Right ventricle myocardium inferior (tissue), 1 donor: ENCODE measurements at regions of chr1 and their contacts with region 1.

Region 1: GRCh38 chr1:93061895-93062792 is 16.9 kb upstream of the MTF2 start:
- DNase-seq: no peak
- ATAC-seq: no peak

Region 2: DNA sequence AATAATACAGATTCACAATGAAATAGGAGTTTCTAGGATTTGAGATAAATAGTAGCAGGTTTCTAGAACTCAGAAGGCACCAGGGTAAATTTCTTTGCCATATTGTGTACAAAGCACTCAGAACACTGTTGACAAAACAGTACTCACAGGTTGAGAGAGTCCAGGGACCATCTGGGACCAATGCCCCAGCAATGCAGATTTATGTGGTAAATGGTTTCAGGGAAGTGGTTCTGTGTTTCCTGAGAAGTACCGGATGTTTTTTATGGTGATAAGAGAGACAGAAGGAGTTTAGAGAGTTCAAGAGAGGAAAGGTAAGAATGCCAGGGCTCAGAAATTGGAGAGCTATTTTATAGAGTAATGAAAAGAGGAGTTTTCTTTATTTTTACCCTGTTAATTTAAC is 71.3 kb before region 1 on chr1:
- intact Hi-C with region 1: no loop called
- DNase-seq: no peak
- ATAC-seq: no peak

Region 3: GRCh38 chr1:93007941-93008577 is 54.1 kb before region 1 on chr1:
- intact Hi-C with region 1: no loop called
- DNase-seq: no peak
- ATAC-seq: no peak

Region 4: GRCh38 chr1:93021539-93022134 is 40.5 kb before region 1 on chr1:
- intact Hi-C with region 1: loop called (anchors 5 kb)
- DNase-seq: no peak
- ATAC-seq: no peak

Region 5: DNA sequence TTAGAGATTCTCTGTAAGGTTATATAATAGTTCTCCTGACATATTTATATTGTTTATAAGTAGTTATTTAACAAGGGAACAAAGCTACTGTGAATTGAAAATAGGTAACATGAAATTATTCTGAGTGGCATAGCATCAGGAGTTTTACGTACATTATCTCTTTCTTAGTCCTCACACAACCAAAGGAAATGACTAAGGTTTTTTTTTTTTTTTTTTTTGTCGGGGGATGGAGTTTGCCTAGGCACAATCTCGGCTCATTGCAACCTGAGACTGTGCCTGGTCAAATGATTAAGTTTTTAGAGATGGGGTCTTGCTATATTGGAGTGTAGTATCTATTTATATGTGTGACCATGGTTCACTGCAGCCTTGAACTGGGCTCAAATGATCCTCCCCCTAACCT is 93.2 kb after region 1 on chr1:
- intact Hi-C with region 1: no loop called
- DNase-seq: no peak
- ATAC-seq: no peak

Region 6: GRCh38 chr1:93244298-93245069 is 182.3 kb after region 1 on chr1:
- intact Hi-C with region 1: no loop called
- DNase-seq: no peak
- ATAC-seq: peak; percentile 83